ENCODE measurements at regions of chr11 and their contacts with region 1.

Region 1: DNA sequence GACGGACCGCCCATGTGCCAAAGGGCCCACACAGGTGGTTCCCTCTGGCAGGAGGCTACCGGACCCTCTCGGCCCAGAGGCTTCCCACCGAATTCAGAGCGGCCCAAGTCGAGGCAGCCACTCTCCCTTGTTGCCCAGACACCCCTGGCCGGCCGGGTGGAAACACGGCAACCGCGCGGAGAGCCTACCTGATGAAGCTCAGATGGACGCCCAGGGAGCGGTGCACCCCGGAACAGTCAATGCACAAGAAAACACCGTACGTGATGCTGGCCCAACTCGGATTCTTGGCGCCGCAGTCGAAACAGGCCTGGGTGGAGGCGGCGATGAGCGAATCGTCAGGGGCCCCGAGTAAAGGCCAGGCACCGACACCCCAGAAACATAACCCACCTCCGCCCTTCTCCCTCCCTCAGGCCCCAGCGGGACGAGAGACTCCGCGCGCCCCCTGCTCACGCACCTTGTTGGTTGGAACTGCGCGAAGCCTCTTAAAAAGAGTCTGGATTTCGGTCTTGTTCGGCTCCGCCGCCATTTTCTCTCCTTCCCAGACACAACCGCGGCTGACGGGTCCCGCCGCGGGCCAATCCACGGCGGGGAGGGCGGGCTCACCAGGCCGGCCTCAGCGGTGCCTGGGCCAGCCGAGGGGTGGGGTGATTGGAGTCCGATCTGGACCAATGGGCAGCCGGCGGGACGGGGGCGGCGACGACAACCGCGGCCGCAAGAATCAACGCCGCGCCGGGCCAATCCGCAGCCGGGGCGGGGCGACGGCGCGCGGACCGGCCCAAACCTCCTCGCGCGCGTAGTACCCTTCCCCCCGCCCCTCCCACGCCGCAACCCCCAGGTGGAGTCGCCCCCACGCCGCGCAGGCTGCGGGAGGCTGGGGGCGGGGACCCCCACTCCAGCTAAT is at the start of gene ARFGAP2:
- DNase-seq: peak; percentile 97 to 99 (median 99)
- ATAC-seq: peak; percentile 95 to 96
- H3K4me3 ChIP-seq: peak within 1 kb of the TSS; percentile 82
- H3K27ac ChIP-seq: peak within 1 kb of the TSS; percentile 99
- H3K4me1 ChIP-seq: peaks cover 13% of the 10 kb centered on the region
- H3K27me3 ChIP-seq: no peaks in the 10 kb centered on the region
- total RNA-seq, gene ARFGAP2: 43.8 to 67.4 (median 56.5) TPM

Region 2: DNA sequence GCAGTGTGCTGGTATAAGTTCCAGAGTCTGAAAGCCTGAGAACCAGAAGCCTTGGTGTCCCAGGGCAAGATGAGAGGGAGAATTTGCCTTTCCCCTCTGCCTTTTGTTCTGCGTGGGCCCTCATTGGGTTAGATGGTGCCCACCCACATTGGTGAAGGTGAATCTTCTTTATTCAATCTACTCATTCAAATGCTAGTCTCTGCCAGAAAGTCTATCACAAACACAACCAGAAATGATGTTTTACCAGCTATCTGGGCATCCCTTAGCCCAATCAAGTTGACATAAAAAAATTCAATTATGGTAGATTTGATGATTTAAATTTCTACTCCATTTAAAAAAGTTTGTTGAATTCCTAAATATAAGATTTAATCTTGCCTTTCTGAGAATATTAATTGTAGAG is 217.8 kb before region 1 on chr11:
- intact Hi-C with region 1: no loop called
- DNase-seq: no peak
- ATAC-seq: no peak
- H3K4me3 ChIP-seq: no peak overlapping the region
- H3K27ac ChIP-seq: no peak overlapping the region
- H3K4me1 ChIP-seq: no peaks in the 10 kb centered on the region
- H3K27me3 ChIP-seq: no peaks in the 10 kb centered on the region

Region 3: DNA sequence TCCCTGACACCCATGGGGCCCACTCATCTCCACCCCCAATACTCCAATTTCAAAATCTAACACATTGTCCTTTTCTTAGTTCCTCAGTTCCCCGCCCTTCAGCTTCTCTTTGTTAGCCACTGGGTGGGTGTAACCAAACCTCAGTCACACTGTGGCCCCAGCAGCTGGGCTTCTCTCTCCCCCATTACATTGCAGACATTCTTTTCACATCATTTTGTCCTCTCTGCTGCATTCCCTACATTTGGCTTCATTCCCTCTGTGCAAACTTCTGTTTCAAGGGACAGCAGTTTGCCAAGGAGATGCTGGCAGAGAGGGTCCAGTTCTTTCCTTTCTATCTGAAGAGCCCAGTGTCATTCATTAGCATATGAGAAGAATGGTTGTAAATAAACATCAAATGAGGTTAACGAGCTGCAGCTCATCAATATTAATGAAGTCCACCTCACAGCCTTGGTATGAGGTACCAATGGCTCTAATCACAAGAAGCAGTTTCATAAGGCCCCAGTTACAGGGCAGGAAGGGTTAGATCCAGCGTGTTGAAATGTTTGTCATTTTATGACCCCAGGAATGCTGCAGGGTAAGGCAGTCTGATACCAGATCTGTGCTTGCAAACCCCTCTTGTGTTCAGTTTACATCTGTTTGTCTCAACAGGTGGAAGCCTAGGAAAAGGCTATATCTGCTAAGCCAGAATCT is 72.2 kb before region 1 on chr11:
- intact Hi-C with region 1: no loop called
- DNase-seq: no peak
- ATAC-seq: no peak
- H3K4me3 ChIP-seq: no peak overlapping the region
- H3K27ac ChIP-seq: no peak overlapping the region
- H3K4me1 ChIP-seq: no peaks in the 10 kb centered on the region
- H3K27me3 ChIP-seq: no peaks in the 10 kb centered on the region

Region 4: DNA sequence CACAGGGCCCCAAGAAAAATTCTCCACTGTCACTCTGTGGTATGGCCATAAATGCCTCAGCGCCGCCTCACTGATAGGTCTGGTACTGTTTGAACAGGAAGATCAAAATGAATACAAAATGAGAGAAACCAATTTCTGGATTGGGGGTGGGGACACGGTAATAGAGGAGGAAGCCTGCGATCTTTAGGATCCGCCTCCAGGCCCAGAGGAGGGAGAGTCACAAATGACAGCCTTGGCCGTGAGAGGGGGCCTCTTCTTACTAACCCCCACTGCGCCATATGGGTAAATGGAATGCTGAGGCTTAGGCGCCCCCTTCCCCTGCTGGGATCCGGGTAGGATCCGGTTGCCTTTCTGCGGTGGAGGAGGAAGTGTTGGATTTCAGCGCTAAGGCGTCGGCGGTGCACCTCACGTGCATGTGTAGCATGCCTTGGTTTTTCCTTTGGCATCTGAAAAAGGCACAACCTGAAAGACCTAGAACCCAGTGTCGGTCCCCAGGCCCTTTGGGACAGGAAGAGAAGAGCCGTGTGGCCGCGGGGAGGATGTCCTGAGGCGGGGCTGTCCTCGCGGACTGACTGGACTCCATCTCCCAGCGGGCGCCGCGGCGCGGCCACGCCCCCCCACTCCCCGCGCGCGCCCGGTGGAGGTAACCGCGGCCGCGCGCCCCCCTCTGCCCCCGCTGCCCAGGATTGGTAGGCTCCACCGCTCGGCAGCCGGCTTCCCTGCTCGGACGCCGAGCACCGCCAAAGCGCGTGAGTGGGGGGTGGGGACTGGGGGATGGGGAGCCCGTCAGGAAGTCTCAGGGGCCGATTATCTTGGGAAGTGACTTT is 92.6 kb after region 1 on chr11:
- intact Hi-C with region 1: loop called in 2 of 4 experiments (anchors 5 kb)
- DNase-seq: peak; percentile 92 to 97 (median 96)
- ATAC-seq: peak; percentile 94
- H3K4me3 ChIP-seq: peak overlapping the region; percentile 81
- H3K27ac ChIP-seq: peak overlapping the region; percentile 96
- H3K4me1 ChIP-seq: peaks cover 9% of the 10 kb centered on the region
- H3K27me3 ChIP-seq: no peaks in the 10 kb centered on the region